T-cell (primary cell): ENCODE measurements at regions of chr14 and their contacts with region 1.

Region 1: GRCh38 chr14:67943947-67944346 is 124.4 kb downstream of the RAD51B start:
- DNase-seq: peak in 32 of 35 experiments; percentile 3 to 78 (median 34)
- ATAC-seq: peak; percentile 32 to 59 (median 46)
- H3K4me3 ChIP-seq: no peak overlapping the region
- H3K4me3 Mint-ChIP-seq: no peak overlapping the region
- H3K27ac ChIP-seq: no peak overlapping the region
- H3K27ac Mint-ChIP-seq: no peak overlapping the region
- H3K4me1 ChIP-seq: no peaks in the 10 kb centered on the region
- H3K4me1 Mint-ChIP-seq: peaks cover 0 to 5% (median 0%) of the 10 kb centered on the region in 3 donors
- H3K27me3 ChIP-seq: no peaks in the 10 kb centered on the region
- H3K27me3 Mint-ChIP-seq: no peaks in the 10 kb centered on the region

Region 2: DNA sequence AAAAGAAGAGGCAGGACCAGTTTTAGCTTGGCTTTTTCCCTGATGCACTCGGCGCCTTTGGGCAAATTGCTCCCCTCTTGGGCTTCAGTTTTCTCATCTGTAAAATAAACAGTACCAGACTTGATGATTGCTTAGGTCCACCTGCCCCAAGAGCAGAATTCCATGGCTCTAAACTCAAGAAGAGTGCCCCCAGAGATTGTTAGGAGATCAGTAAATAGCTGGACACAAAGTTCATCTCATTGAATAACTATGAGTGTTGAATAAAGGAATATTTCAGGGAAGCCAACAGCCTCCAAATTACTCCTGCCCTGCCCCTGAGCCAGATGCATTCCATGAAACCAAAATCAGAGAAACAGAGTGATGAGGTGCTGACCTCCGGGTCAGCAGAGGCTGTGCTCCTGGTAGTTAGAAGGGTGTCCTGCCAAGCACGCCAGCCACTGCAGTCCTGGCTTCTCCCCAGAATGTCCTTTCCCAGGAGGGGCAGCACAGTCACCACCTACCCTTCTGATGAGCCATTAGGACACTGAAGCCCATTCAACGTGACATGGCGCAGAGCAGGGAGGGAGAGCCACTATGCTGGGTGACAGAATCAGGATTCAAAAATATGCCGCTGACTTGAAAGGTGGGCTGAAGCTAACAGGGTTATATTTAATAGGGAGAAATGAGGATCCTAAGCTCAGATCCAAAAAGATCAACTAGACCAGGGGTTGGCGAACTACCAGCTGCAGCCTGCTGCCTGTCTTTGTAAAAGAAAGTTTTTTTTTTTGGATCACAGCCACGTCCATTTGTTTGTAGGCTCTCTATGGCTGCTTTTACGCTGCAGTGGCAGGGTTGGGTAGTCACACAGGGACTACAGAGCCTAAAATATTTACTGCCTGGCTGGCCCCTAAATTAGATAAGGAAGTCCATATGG is 497.6 kb before region 1 on chr14:
- CTCF ChIA-PET with region 1: no interaction called
- POLR2A ChIA-PET with region 1: no interaction called
- DNase-seq: no peak
- ATAC-seq: no peak
- H3K4me3 ChIP-seq: no peak overlapping the region
- H3K4me3 Mint-ChIP-seq: no peak overlapping the region
- H3K27ac ChIP-seq: no peak overlapping the region
- H3K27ac Mint-ChIP-seq: no peak overlapping the region
- H3K4me1 ChIP-seq: no peaks in the 10 kb centered on the region
- H3K4me1 Mint-ChIP-seq: no peaks in the 10 kb centered on the region
- H3K27me3 ChIP-seq: no peaks in the 10 kb centered on the region
- H3K27me3 Mint-ChIP-seq: peaks cover 8 to 24% of the 10 kb centered on the region in 2 donors

Region 3: DNA sequence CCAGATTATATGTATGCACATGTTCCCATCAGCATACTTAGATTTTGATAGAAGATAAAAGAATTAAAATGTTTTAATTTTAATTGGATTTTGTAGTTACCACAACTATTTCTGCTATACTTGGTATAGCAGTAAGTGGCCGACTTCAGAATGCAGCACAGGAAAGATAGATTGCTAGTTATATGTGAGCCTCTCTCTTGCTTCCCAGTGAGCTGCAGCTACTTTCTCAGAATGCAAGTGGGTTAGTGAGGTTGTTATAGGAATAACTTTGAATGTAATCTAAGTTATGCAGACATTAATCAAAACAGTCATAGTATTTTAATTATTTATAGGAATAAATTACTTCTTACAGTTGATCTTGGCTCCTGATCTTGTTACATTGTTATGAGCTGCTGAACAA is 116.3 kb after region 1 on chr14:
- CTCF ChIA-PET with region 1: no interaction called
- POLR2A ChIA-PET with region 1: interaction called in 1 of 2 experiments, 15 read pairs
- DNase-seq: no peak
- ATAC-seq: no peak
- H3K4me3 ChIP-seq: no peak overlapping the region
- H3K4me3 Mint-ChIP-seq: no peak overlapping the region
- H3K27ac ChIP-seq: no peak overlapping the region
- H3K27ac Mint-ChIP-seq: no peak overlapping the region
- H3K4me1 ChIP-seq: no peaks in the 10 kb centered on the region
- H3K4me1 Mint-ChIP-seq: peaks cover 0 to 5% (median 0%) of the 10 kb centered on the region in 3 donors
- H3K27me3 ChIP-seq: no peaks in the 10 kb centered on the region
- H3K27me3 Mint-ChIP-seq: no peaks in the 10 kb centered on the region

Region 4: DNA sequence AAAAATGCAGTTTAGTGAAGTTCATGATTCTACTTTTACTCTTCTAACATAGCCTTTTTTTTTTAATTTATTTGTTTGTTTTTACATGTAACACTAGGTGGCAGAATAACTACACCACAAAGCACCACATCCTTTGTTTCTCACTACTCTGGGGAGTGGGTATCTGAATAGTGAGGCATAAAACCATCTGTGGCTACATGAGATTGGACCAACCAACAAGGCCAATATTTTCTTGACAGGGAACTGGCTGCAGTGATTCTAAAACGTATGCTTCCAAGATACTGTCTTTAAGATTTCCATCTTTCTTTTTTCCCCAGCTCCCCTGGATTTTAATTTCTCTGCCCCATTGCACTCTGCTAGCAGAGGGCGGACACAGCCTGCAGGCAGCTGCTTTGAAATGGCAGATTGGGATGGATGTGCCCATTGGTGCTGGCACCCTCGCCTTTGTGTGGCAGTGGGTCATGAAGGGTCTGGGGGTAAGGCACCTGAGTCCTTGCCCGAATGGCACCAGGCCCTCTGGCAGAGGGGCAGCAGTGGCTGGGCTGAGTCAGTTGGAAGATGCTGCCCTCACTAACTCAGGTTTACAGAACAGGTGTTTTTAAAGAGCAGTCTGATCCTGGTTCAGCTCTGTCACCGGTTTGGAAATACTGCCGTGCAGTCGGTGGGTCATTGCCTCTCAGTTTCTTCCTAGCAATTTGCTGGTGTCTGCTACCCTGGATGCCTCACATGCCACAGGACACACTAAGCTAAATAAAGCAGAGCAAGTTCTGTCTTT is 304.7 kb after region 1 on chr14:
- CTCF ChIA-PET with region 1: interaction called in 1 of 2 experiments, 12 read pairs
- POLR2A ChIA-PET with region 1: no interaction called
- DNase-seq: peak in 6 of 35 experiments; percentile 4 to 77 (median 20)
- ATAC-seq: peak; percentile 64 to 83 (median 74)
- H3K4me3 ChIP-seq: no peak overlapping the region
- H3K4me3 Mint-ChIP-seq: no peak overlapping the region
- H3K27ac ChIP-seq: no peak overlapping the region
- H3K27ac Mint-ChIP-seq: peak overlapping the region; percentile 61 to 73
- H3K4me1 ChIP-seq: peaks cover 6 to 30% of the 10 kb centered on the region in 2 experiments
- H3K4me1 Mint-ChIP-seq: peaks cover 36 to 48% (median 41%) of the 10 kb centered on the region in 3 donors
- H3K27me3 ChIP-seq: no peaks in the 10 kb centered on the region
- H3K27me3 Mint-ChIP-seq: no peaks in the 10 kb centered on the region

Region 5: GRCh38 chr14:68843471-68844209 is 899.7 kb after region 1 on chr14:
- CTCF ChIA-PET with region 1: interaction called, 13 to 16 read pairs
- POLR2A ChIA-PET with region 1: no interaction called
- DNase-seq: peak; percentile 46 to 85 (median 69)
- ATAC-seq: peak; percentile 61 to 89 (median 82)
- H3K4me3 ChIP-seq: peak overlapping the region in 1 of 2 donors; percentile 23
- H3K4me3 Mint-ChIP-seq: peak overlapping the region; percentile 25 to 50 (median 37)
- H3K27ac ChIP-seq: no peak overlapping the region
- H3K27ac Mint-ChIP-seq: no peak overlapping the region
- H3K4me1 ChIP-seq: peaks cover 6 to 19% of the 10 kb centered on the region in 2 experiments
- H3K4me1 Mint-ChIP-seq: peaks cover 19 to 32% (median 20%) of the 10 kb centered on the region in 3 donors
- H3K27me3 ChIP-seq: peaks cover 0 to 11% of the 10 kb centered on the region in 2 experiments
- H3K27me3 Mint-ChIP-seq: peaks cover 0 to 8% of the 10 kb centered on the region in 2 donors

Region 6: GRCh38 chr14:68849413-68849812 is 905.5 kb after region 1 on chr14:
- CTCF ChIA-PET with region 1: interaction called, 13 to 16 read pairs
- POLR2A ChIA-PET with region 1: no interaction called
- DNase-seq: no peak
- ATAC-seq: no peak
- H3K4me3 ChIP-seq: no peak overlapping the region
- H3K4me3 Mint-ChIP-seq: no peak overlapping the region
- H3K27ac ChIP-seq: no peak overlapping the region
- H3K27ac Mint-ChIP-seq: no peak overlapping the region
- H3K4me1 ChIP-seq: no peaks in the 10 kb centered on the region
- H3K4me1 Mint-ChIP-seq: peaks cover 0 to 5% (median 4%) of the 10 kb centered on the region in 3 donors
- H3K27me3 ChIP-seq: no peaks in the 10 kb centered on the region
- H3K27me3 Mint-ChIP-seq: peaks cover 0 to 5% of the 10 kb centered on the region in 2 donors